GM13977 (cell line): ENCODE measurements at regions of chr2 and their contacts with region 1.

Region 1: DNA sequence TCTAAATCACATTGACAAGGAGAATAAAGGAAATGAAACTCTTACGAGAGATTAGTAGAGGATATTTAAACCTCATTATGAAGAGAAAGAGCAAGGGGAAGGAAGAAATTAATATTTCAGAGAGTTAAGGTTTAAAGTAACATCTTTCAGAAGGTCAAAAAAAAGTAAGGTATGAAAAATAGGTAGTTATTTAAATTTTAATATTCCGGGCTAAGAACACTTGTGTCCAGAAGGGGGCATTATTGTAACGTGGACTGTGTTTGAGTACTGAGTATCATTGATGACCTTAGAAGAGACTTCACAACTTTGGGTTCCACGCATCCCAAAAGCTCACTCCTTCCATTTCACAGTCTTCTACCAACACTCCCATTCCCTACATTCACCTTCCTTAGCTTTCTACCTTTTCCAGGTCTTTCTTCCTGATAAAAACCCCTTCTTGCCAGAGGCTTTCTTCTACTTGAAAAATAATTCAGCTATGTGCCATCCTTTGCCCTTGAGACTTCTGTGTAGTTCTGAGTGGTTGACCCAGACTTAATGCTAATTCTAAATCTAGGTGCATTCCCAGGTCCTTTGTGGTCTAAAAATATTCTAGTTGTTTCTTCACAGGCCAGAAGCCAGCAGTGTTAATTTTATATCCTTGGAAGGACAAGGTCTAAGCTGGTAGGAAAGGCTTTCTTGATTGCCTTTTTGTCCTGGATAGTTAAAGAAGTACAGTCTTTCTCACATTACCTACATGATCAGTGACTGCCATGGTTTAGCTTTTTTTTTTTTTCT is 16.5 kb downstream of the DYNC1I2 start:
- DNase-seq: peak; percentile 27
- CTCF ChIP-seq: peak; percentile 53

Region 2: GRCh38 chr2:171587567-171587966 is 116.2 kb before region 1 on chr2:
- in situ Hi-C with region 1: loop called (anchors 10 kb)
- DNase-seq: no peak
- CTCF ChIP-seq: no peak

Region 3: GRCh38 chr2:172102391-172103278 is 398.9 kb after region 1 on chr2 and contains the start of gene DLX2:
- in situ Hi-C with region 1: loop called (anchors 10 kb)
- DNase-seq: peak; percentile 91
- CTCF ChIP-seq: no peak